ENCODE measurements at regions of chr15 and their contacts with region 1.

Region 1: GRCh38 chr15:49415638-49416037 is 7.4 kb upstream of the FGF7 start:
- DNase-seq: no peak
- H3K4me3 ChIP-seq: no peak overlapping the region
- H3K27ac ChIP-seq: no peak overlapping the region
- H3K4me1 ChIP-seq: no peaks in the 10 kb centered on the region
- H3K27me3 ChIP-seq: no peaks in the 10 kb centered on the region
- CTCF ChIP-seq: no peak
- POLR2A ChIP-seq: no peak

Region 2: GRCh38 chr15:49235446-49236124 is 180.1 kb before region 1 on chr15:
- intact Hi-C with region 1: loop called (anchors 5 kb)
- DNase-seq: no peak
- H3K4me3 ChIP-seq: no peak overlapping the region
- H3K27ac ChIP-seq: peak overlapping the region in 4 of 8 donors; percentile 1 to 54 (median 6)
- H3K4me1 ChIP-seq: peaks cover 0 to 21% (median 11%) of the 10 kb centered on the region in 6 donors
- H3K27me3 ChIP-seq: no peaks in the 10 kb centered on the region
- CTCF ChIP-seq: peak; percentile 33 to 80 (median 66)
- POLR2A ChIP-seq: no peak

Region 3: DNA sequence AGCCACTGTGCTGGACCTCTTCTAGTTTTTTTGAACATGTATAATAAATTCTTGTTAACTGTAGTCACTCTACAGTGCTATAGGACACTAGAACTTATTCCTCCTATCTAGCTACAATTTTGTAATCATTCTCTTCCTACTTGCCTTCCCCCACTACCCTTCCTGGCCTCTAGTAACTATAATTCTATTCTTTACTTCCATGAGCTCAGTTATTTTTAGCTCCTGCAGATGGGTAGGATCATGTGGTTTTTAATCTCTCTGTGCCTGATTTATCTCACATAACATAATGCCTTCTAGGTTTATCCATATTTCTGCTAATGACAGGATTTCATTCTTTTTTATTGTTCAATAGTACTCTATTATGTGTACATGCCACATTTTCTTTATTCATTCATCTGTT is 105.7 kb before region 1 on chr15:
- intact Hi-C with region 1: no loop called
- DNase-seq: no peak
- H3K4me3 ChIP-seq: no peak overlapping the region
- H3K27ac ChIP-seq: no peak overlapping the region
- H3K4me1 ChIP-seq: no peaks in the 10 kb centered on the region
- H3K27me3 ChIP-seq: no peaks in the 10 kb centered on the region
- CTCF ChIP-seq: no peak
- POLR2A ChIP-seq: no peak

Region 4: DNA sequence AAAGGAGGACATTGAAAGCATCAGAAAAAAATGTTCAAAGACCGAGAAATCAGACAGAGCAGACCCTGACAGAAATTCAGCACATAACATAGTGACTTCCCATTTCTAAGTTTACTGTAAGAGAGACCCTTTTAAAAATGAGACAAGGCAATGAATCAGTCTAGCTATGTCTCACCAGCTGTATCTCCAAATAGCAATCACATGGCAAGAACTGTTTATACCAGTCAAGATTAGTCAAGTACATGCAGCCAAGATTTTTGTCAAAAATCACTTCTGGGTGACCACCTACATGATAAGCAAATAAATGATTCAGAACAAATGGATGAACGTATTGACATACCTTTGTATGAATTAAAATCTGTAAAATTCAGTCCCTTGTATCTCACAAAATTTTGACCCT is 343.2 kb after region 1 on chr15:
- intact Hi-C with region 1: no loop called
- DNase-seq: no peak
- H3K4me3 ChIP-seq: no peak overlapping the region
- H3K27ac ChIP-seq: no peak overlapping the region
- H3K4me1 ChIP-seq: no peaks in the 10 kb centered on the region
- H3K27me3 ChIP-seq: no peaks in the 10 kb centered on the region
- CTCF ChIP-seq: no peak
- POLR2A ChIP-seq: no peak

Measured in spleen (tissue), 13 donors.